ENCODE measurements at regions of chr2 and their contacts with region 1.

Region 1: GRCh38 chr2:97663965-97664635 is at the start of gene ACTR1B:
- DNase-seq: peak; percentile 97
- H3K27ac ChIP-seq: peak within 1 kb of the TSS; percentile 95
- CTCF ChIP-seq: peak; percentile 72

Region 2: DNA sequence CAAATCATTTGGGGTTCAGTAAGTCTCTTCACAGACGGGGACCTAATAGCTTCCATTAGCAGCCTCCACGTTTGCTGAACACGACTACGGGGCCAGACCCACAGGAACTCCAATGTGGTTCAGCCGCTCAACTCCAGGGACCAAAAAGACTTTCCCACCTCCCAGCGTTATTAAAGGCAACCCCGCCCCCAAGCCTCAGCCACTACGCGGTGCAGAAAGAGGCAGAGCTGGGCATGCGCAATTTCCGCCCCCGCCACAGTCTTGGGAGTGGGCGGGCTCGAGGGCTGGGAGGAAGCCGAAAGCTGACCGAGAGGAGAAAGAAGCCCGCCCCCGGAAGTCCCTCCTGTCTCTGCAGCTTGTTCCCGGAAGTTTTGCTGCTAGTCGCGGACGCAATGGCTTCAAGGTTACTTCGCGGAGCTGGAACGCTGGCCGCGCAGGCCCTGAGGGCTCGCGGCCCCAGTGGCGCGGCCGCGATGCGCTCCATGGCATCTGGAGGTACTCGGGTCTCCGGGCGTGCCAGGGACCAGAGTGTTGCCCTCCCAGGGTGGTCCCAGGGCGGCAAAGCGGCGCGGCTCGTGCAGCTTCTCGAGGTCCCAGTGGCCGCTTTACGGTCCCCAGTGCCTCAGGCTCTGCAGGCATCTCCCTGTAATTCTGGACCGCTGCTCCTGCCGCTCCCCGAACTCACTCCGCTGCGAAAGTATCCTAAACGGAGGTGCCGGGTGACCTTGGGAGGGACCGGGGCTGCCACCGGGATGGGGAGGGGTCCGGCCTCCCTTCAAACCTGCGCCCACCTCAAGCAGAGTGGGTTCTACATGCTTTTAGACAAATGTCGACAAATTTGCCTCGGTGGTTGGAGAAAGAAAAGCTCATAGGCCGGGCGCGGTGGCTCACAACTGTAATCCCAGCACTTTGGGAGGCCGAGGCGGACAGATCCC is 18.1 kb before region 1 on chr2 and contains the start of gene COX5B:
- CTCF ChIA-PET with region 1: no interaction called
- POLR2A ChIA-PET with region 1: interaction called, 10 read pairs
- DNase-seq: peak; percentile 98
- H3K27ac ChIP-seq: peak within 1 kb of the TSS; percentile 81
- CTCF ChIP-seq: no peak

Region 3: DNA sequence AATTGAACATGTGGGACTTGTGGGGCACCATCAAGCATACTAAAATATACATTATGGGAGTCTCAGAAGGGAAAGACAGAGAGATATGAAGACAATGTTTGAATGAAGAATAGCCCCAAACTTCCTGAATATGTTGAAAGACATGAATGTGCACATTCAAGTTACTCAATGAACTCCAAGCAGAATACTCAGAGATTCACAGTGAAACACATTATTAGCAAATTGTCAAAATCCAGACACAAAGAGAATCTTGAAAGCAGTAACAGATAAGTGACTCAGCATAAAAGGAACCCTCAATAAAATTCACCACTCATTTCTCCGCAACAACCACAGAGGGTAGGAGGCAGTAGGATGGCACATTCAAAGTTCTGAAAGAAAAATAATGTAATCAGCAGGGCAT is 14.2 kb after region 1 on chr2:
- CTCF ChIA-PET with region 1: interaction called, 11 read pairs
- POLR2A ChIA-PET with region 1: interaction called, 4 read pairs
- DNase-seq: no peak
- H3K27ac ChIP-seq: no peak overlapping the region
- CTCF ChIP-seq: no peak

Region 4: GRCh38 chr2:97691177-97691576 is 27.1 kb after region 1 on chr2:
- CTCF ChIA-PET with region 1: interaction called, 10 read pairs
- POLR2A ChIA-PET with region 1: interaction called, 3 read pairs
- DNase-seq: no peak
- H3K27ac ChIP-seq: no peak overlapping the region
- CTCF ChIP-seq: no peak

Region 5: DNA sequence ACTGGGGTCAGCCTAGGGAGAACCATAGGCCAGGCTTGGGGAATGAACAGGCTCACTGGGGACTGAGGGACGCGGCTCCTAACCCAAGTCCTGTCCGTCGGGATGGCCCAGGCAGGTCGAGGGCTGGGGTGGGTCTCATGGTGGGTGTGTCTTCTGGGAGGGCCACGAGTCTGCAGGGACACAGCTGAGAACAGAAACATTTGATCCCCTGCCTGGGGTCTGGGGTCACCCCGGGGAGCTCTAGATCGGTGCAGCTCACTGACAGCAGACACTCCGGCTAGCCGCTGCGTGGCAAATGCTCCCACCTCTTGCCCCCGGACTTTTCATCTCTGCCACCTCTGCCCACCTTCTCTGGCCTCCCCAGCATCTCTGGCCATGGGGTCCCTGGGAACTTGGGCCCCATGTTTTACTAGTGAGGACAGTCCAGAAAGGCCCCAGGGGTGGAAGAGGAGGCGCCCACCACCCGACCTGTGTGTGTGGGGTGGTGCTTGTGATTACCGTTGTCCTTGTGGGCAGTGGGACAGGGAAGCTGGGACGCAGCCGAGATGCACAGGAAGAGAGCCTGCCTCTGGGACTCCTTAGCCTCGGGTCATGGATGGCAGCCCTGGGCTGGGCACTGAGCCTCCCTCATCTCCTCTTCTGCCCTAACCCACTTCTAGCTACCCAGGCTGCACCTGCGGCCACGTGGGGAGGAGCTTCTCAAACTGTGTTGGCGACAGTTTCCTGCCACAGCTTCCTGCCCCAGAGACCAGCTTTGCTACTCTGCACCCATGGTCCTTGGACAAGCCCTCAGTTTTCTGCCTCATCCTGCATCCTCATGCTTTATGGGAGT is 54.2 kb after region 1 on chr2:
- CTCF ChIA-PET with region 1: no interaction called
- POLR2A ChIA-PET with region 1: no interaction called
- DNase-seq: no peak
- H3K27ac ChIP-seq: no peak overlapping the region
- CTCF ChIP-seq: no peak

Region 6: GRCh38 chr2:97914691-97915213 is 250.7 kb after region 1 on chr2:
- CTCF ChIA-PET with region 1: no interaction called
- POLR2A ChIA-PET with region 1: no interaction called
- DNase-seq: no peak
- H3K27ac ChIP-seq: no peak overlapping the region
- CTCF ChIP-seq: no peak

Measured in RWPE1 (cell line).